ENCODE measurements at regions of chr11 and their contacts with region 1.

Region 1: GRCh38 chr11:71420455-71421241 is 27.5 kb downstream of the DHCR7 start:
- DNase-seq: no peak
- ATAC-seq: no peak
- H3K4me3 ChIP-seq: no peak overlapping the region
- H3K27ac ChIP-seq: no peak overlapping the region
- H3K4me1 ChIP-seq: no peaks in the 10 kb centered on the region
- H3K27me3 ChIP-seq: no peaks in the 10 kb centered on the region
- CTCF ChIP-seq: peak in 3 of 5 experiments; percentile 35 to 45 (median 39)
- POLR2A ChIP-seq: no peak

Region 2: GRCh38 chr11:71364176-71364671 is 56.4 kb before region 1 on chr11:
- in situ Hi-C with region 1: no loop called
- intact Hi-C with region 1: loop called (anchors 10 kb)
- DNase-seq: no peak
- ATAC-seq: no peak
- H3K4me3 ChIP-seq: no peak overlapping the region
- H3K27ac ChIP-seq: no peak overlapping the region
- H3K4me1 ChIP-seq: no peaks in the 10 kb centered on the region
- H3K27me3 ChIP-seq: peaks cover 0 to 3% (median 0%) of the 10 kb centered on the region in 3 donors
- CTCF ChIP-seq: no peak
- POLR2A ChIP-seq: no peak

Region 3: DNA sequence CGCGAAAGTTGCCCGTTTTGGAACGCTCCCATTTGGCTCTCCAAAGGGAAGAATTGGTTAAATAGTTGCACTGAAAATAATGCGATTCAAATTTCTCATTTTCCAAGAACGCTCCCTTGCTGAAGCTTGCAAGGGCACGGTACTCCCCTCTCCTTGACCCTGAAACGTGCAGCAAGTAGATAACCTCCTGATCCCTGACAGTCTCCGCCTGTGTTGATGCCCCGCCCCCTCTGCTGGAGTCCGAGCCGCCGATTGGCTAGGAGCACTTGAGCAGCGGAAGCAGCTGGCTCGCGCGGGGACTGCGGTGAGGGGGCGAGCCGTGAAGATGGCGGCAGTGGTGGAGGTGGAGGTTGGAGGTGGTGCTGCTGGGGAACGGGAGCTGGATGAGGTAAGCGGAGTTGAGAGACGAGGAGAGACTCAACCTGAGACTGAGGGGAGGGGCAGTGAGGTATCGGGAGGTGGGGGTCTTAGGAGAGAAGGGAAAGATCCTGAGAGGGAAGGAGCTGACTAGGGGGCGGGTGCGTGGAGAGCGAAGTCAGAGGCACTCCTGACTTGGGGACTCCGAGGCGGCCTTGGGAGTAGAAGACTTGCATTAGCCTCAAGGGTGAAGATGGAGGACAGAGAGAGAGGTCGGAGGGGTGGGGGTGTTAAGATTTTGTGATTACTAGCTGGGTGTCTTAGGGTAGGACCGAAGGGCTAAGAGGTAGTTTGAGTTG is 508.2 kb after region 1 on chr11 and contains the start of gene RNF121:
- in situ Hi-C with region 1: no loop called
- intact Hi-C with region 1: no loop called
- DNase-seq: peak; percentile 97
- ATAC-seq: peak; percentile 97
- H3K4me3 ChIP-seq: peak within 1 kb of the TSS; percentile 82 to 98 (median 90)
- H3K27ac ChIP-seq: peak within 1 kb of the TSS; percentile 84 to 93 (median 90)
- H3K4me1 ChIP-seq: peaks cover 47 to 50% of the 10 kb centered on the region in 2 donors
- H3K27me3 ChIP-seq: no peaks in the 10 kb centered on the region
- CTCF ChIP-seq: no peak
- POLR2A ChIP-seq: peak; percentile 65 to 79
- total RNA-seq, gene RNF121: 25.0 to 35.5 (median 26.7) TPM

Measured in gastrocnemius medialis (tissue), 4 donors.